ENCODE measurements at regions of chr5 and their contacts with region 1.

Region 1: DNA sequence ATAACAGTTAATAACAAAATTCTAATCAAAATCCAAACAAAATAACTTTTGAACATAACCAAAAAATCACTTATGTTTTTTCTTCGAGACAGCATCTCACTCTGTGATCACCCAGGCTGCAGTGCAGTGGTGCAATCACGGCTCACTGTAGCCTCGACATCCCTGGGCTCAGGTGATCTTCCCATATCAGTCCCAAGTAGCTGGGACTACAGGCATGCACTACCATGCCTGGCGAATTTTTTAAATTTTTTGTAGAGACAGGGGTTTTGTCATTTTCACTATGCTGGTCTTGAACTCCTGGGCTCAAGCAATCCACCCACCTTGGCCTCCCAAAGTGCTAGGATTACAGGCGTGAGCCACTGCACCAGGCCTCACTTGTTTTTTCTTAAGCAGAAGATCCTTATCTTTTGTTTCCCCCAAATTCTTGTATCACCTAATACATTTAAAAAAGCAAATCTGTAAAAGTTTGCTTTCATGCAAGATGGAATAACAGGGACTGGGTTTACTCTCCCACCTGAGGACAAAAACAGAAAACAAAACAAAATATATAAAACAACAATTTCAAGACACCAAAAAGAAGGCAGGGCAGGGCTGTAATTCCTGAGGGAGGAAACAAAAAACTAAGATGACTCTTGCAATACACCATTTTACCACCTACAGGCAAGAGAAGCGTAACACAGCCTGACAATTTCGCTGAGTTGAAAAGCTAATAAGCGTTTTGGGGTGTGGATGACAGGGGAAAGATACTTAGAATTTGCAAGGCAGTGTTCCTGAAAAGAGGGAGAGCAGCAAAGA is 71.4 kb downstream of the RAPGEF6 start:
- DNase-seq: no peak
- H3K4me3 ChIP-seq: no peak overlapping the region
- H3K4me3 Mint-ChIP-seq: peak overlapping the region in 2 of 8 donors; percentile 1 to 37
- H3K27ac ChIP-seq: no peak overlapping the region
- H3K27ac Mint-ChIP-seq: peak overlapping the region in 5 of 7 donors; percentile 6 to 54 (median 51)
- H3K4me1 ChIP-seq: peaks cover 10% of the 10 kb centered on the region
- H3K4me1 Mint-ChIP-seq: peaks cover 20 to 52% (median 29%) of the 10 kb centered on the region in 4 donors
- H3K27me3 ChIP-seq: no peaks in the 10 kb centered on the region
- H3K27me3 Mint-ChIP-seq: no peaks in the 10 kb centered on the region

Region 2: DNA sequence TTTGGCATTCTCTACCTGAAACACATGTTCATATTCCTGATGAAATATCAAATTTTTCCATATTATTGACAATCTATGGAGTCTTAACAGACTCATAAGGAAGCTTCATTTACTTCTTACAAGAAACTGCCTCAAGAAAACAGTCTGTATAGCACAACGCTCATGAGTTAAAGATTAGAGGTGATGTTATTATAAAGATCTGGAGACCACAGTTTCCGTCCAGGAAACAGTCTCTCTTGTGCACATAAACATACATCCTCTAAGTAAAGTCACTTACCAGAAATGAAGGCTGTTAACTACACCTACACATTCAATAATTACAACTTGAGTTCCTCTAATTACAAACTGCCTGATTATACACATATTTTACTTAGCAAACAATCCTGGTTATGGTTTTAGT is 15.5 kb before region 1 on chr5:
- CTCF ChIA-PET with region 1: interaction called, 5 read pairs
- POLR2A ChIA-PET with region 1: interaction called, 3 read pairs
- intact Hi-C with region 1: loop called (anchors 2 kb)
- DNase-seq: peak; percentile 54 to 71 (median 60)
- H3K4me3 ChIP-seq: peak overlapping the region; percentile 70 to 79
- H3K4me3 Mint-ChIP-seq: peak overlapping the region; percentile 84 to 99 (median 96)
- H3K27ac ChIP-seq: peak overlapping the region; percentile 61
- H3K27ac Mint-ChIP-seq: peak overlapping the region; percentile 89 to 97 (median 96)
- H3K4me1 ChIP-seq: peaks cover 64% of the 10 kb centered on the region
- H3K4me1 Mint-ChIP-seq: peaks cover 46 to 77% (median 57%) of the 10 kb centered on the region in 4 donors
- H3K27me3 ChIP-seq: no peaks in the 10 kb centered on the region
- H3K27me3 Mint-ChIP-seq: no peaks in the 10 kb centered on the region

Region 3: GRCh38 chr5:131581702-131582101 is 18.1 kb after region 1 on chr5:
- CTCF ChIA-PET with region 1: no interaction called
- POLR2A ChIA-PET with region 1: no interaction called
- intact Hi-C with region 1: loop called (anchors 2 kb)
- DNase-seq: no peak
- H3K4me3 ChIP-seq: no peak overlapping the region
- H3K4me3 Mint-ChIP-seq: no peak overlapping the region
- H3K27ac ChIP-seq: no peak overlapping the region
- H3K27ac Mint-ChIP-seq: peak overlapping the region in 4 of 7 donors; percentile 7 to 70 (median 27)
- H3K4me1 ChIP-seq: peaks cover 5% of the 10 kb centered on the region
- H3K4me1 Mint-ChIP-seq: peaks cover 34 to 60% (median 46%) of the 10 kb centered on the region in 4 donors
- H3K27me3 ChIP-seq: no peaks in the 10 kb centered on the region
- H3K27me3 Mint-ChIP-seq: no peaks in the 10 kb centered on the region

Region 4: GRCh38 chr5:132162945-132163344 is 599.3 kb after region 1 on chr5:
- CTCF ChIA-PET with region 1: no interaction called
- POLR2A ChIA-PET with region 1: no interaction called
- intact Hi-C with region 1: no loop called
- DNase-seq: no peak
- H3K4me3 ChIP-seq: no peak overlapping the region
- H3K4me3 Mint-ChIP-seq: no peak overlapping the region
- H3K27ac ChIP-seq: no peak overlapping the region
- H3K27ac Mint-ChIP-seq: no peak overlapping the region
- H3K4me1 ChIP-seq: no peaks in the 10 kb centered on the region
- H3K4me1 Mint-ChIP-seq: peaks cover 0 to 5% (median 2%) of the 10 kb centered on the region in 4 donors
- H3K27me3 ChIP-seq: no peaks in the 10 kb centered on the region
- H3K27me3 Mint-ChIP-seq: peaks cover 0 to 3% of the 10 kb centered on the region in 2 donors

Measured in CD4-positive, alpha-beta memory T cell (primary cell).